ENCODE measurements at regions of chr1 and their contacts with region 1.

Region 1: DNA sequence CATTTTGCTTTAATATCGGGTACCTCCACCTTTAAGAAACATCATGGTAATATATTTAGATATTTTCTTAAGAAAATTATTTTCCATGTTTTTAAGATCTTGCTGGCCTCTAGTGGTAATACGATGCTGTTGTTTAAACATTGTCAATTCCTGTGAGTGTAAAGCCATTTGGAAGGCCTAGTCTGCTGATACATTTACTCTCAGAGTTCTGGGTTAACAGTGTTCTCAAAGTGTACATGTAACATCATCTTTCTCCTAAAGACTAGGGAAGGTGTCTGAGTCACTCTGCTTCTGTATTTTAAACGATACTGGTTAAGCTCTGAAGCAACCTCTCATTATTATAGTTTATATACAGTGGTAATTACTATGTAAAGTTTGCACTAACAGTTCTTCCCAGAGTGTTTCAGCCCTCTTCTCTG is 189.1 kb downstream of the RASAL2 start:
- DNase-seq: peak; percentile 34 to 59 (median 56)
- H3K4me3 ChIP-seq: no peak overlapping the region
- H3K27ac ChIP-seq: peak overlapping the region in 1 of 2 experiments; percentile 49
- H3K4me1 ChIP-seq: peaks cover 0 to 35% (median 10%) of the 10 kb centered on the region in 4 experiments
- H3K27me3 ChIP-seq: no peaks in the 10 kb centered on the region

Region 2: GRCh38 chr1:178031856-178032320 is 251.1 kb before region 1 on chr1:
- CTCF ChIA-PET with region 1: interaction called, 29 read pairs
- POLR2A ChIA-PET with region 1: no interaction called
- DNase-seq: peak; percentile 71 to 82 (median 74)
- H3K4me3 ChIP-seq: no peak overlapping the region
- H3K27ac ChIP-seq: no peak overlapping the region
- H3K4me1 ChIP-seq: no peaks in the 10 kb centered on the region
- H3K27me3 ChIP-seq: no peaks in the 10 kb centered on the region

Region 3: DNA sequence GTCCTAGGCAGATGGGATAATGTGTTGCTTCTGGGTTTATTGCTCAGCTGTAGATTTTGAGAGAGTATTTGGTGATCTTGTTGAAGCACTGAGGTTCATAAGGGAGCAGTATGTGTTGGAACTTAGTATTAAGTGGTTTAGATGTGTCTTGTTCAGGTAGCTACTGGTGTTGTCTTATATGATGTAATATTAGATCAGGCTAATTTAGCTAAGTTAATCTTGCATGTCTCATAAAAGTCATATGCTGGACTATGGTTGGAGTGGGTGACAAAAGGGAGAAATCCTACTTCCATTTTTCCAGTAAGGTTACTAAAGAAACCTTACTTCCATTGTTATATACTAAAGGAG is 17.4 kb after region 1 on chr1:
- CTCF ChIA-PET with region 1: interaction called, 15 read pairs
- POLR2A ChIA-PET with region 1: no interaction called
- DNase-seq: no peak
- H3K4me3 ChIP-seq: no peak overlapping the region
- H3K27ac ChIP-seq: no peak overlapping the region
- H3K4me1 ChIP-seq: no peaks in the 10 kb centered on the region
- H3K27me3 ChIP-seq: no peaks in the 10 kb centered on the region